MCF 10A (cell line): ENCODE measurements at regions of chr4 and their contacts with region 1.

Region 1: GRCh38 chr4:78551479-78552351 is at the start of gene ANXA3:
- DNase-seq: peak; percentile 53
- H3K4me3 Mint-ChIP-seq: peak within 1 kb of the TSS; percentile 93
- H3K27ac Mint-ChIP-seq: peak within 1 kb of the TSS; percentile 96
- H3K4me1 Mint-ChIP-seq: peaks cover 23% of the 10 kb centered on the region
- H3K27me3 Mint-ChIP-seq: no peaks in the 10 kb centered on the region
- CTCF ChIP-seq: no peak
- total RNA-seq, gene ANXA3: 260 and 272 TPM in 2 replicates

Region 2: DNA sequence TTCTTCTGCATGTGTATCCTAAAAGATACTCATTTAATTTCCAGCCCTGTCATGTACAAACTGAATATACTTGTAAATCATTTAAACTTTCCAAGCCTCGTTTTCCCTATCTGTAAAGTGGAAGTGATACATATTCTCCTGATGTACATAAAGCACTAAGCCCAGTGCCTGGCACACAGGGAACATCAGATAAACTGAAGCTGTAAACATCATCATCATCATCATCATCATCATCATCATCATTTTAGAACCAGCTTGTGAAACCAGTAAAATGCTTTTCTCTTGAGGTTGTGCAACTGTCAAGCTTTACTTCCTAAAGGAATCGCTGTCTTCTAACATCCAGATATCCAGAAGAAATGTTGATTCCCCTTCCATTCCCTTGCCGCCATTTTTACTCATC is 83.4 kb before region 1 on chr4:
- CTCF ChIA-PET with region 1: no interaction called
- POLR2A ChIA-PET with region 1: no interaction called
- intact Hi-C with region 1: no loop called
- DNase-seq: no peak
- H3K4me3 Mint-ChIP-seq: no peak overlapping the region
- H3K27ac Mint-ChIP-seq: no peak overlapping the region
- H3K4me1 Mint-ChIP-seq: no peaks in the 10 kb centered on the region
- H3K27me3 Mint-ChIP-seq: no peaks in the 10 kb centered on the region
- CTCF ChIP-seq: no peak

Region 3: GRCh38 chr4:78569291-78569821 is 17.6 kb after region 1 on chr4:
- CTCF ChIA-PET with region 1: interaction called, 3 read pairs
- POLR2A ChIA-PET with region 1: interaction called, 38 read pairs
- intact Hi-C with region 1: no loop called
- DNase-seq: peak; percentile 54
- H3K4me3 Mint-ChIP-seq: peak overlapping the region; percentile 48
- H3K27ac Mint-ChIP-seq: peak overlapping the region; percentile 93
- H3K4me1 Mint-ChIP-seq: peaks cover 48% of the 10 kb centered on the region
- H3K27me3 Mint-ChIP-seq: no peaks in the 10 kb centered on the region
- CTCF ChIP-seq: no peak

Region 4: DNA sequence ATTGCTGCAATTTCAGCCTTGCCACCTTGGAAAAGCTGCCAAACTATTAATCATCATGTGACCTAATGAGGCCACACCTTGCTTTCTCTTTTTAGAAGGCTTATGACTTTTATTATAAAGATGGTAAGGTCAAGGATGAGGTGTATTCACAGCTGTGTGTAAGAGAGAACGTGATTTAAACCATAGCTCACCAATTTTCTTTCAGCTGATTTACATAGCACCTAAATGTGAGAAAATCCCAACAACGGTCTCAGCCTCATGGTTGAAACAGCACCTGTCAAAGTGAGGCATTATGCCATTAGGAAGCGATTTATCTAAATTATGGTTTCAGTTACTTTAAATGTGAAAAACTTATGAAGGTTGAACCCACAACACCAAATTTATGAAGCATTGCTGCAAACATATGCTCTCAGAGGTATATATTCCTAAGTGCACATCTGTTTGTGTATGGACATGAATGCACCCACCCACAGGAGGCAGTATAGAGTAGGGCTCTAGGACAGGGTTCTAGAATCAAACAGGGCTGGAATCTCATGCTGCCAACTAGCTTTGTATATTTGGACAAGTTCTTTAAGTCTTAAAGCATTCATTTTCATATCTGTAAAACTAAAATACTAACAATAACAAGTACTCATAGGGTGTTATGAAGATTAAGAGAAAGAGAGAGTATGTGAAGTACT is 40.5 kb after region 1 on chr4:
- CTCF ChIA-PET with region 1: no interaction called
- POLR2A ChIA-PET with region 1: interaction called, 7 read pairs
- intact Hi-C with region 1: loop called (anchors 1 kb)
- DNase-seq: peak; percentile 35
- H3K4me3 Mint-ChIP-seq: no peak overlapping the region
- H3K27ac Mint-ChIP-seq: no peak overlapping the region
- H3K4me1 Mint-ChIP-seq: peaks cover 17% of the 10 kb centered on the region
- H3K27me3 Mint-ChIP-seq: no peaks in the 10 kb centered on the region
- CTCF ChIP-seq: peak; percentile 48